ENCODE measurements at regions of chr11 and their contacts with region 1.

Region 1: DNA sequence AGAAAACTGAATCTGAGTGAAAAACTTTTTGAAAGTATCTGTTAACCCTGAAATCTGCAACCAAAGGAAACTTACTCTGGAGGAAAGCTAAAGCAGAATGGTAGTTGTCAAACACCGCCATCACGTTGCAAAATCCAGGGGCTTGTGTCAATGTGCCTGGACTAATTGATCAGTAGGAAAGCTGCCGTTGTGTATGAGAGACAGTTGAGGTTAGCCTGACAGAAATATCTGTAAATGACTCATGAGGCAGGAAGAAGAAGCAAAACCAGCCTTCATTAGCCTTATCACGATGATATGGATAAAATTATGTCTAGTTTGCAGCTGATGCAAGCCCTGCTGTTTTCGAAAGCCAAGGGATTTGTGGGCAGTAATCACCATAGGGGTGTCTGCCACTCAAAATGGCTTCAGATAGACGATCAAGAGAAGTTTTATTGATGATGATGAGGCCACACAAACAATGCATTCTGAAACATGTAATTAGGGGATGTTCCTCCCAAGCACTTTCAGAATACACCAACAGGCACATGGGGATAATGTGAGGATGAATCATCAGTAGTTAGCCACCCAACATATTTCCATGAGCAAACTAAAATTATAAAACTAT is 8.9 kb downstream of the SCGB1A1 start:
- DNase-seq: no peak
- H3K4me3 ChIP-seq: no peak overlapping the region
- H3K27ac ChIP-seq: no peak overlapping the region
- H3K4me1 ChIP-seq: 0 out of 7 replicates have a peak, but pooled peaks cover 0 to 2% (median 0%) of the 10 kb centered on the region in 4 experiments
- H3K27me3 ChIP-seq: peaks cover 0 to 15% (median 10%) of the 10 kb centered on the region in 4 experiments; a peak in 6 of 7 replicates
- CTCF ChIP-seq: no peak
- EP300 ChIP-seq: no peak
- POLR2A ChIP-seq: no peak
- RAD21 ChIP-seq: no peak

Region 2: GRCh38 chr11:62143727-62144126 is 284.0 kb before region 1 on chr11:
- CTCF ChIA-PET with region 1: no interaction called
- POLR2A ChIA-PET with region 1: no interaction called
- DNase-seq: no peak
- H3K4me3 ChIP-seq: no peak overlapping the region
- H3K27ac ChIP-seq: no peak overlapping the region
- H3K4me1 ChIP-seq: no peaks in the 10 kb centered on the region
- H3K27me3 ChIP-seq: no peaks in the 10 kb centered on the region
- CTCF ChIP-seq: peak in 1 of 3 experiments; percentile 20; a peak in 1 of 4 replicates
- EP300 ChIP-seq: no peak
- POLR2A ChIP-seq: no peak
- RAD21 ChIP-seq: no peak

Region 3: DNA sequence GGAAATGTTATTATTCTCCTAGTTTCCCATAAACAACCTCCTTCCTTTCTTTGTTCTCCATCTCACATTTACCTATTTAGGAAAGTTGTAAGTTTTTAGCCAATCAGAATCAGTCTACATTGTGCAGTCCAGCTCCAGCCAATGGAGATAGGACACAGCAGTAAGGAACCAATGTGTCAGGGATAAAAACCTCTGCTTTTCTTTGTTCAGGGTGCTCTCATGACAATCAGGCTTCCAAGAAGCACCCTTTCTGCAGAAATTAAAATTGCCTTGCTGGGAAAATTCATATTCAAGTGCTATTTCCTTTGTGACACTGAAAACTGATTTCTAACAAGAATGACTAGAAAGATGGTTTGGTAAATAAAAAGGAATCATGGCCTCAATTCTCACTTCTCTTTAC is 204.6 kb before region 1 on chr11:
- CTCF ChIA-PET with region 1: no interaction called
- POLR2A ChIA-PET with region 1: no interaction called
- DNase-seq: no peak
- H3K4me3 ChIP-seq: no peak overlapping the region
- H3K27ac ChIP-seq: no peak overlapping the region
- H3K4me1 ChIP-seq: peaks cover 0 to 3% (median 0%) of the 10 kb centered on the region in 4 experiments; a peak in 1 of 7 replicates
- H3K27me3 ChIP-seq: no peaks in the 10 kb centered on the region
- CTCF ChIP-seq: no peak
- EP300 ChIP-seq: no peak
- POLR2A ChIP-seq: no peak
- RAD21 ChIP-seq: no peak

Region 4: GRCh38 chr11:62444236-62444833 is 16.6 kb after region 1 on chr11:
- CTCF ChIA-PET with region 1: interaction called, 14 read pairs
- POLR2A ChIA-PET with region 1: no interaction called
- DNase-seq: no peak
- H3K4me3 ChIP-seq: no peak overlapping the region; a peak in 1 of 8 replicates
- H3K27ac ChIP-seq: no peak overlapping the region
- H3K4me1 ChIP-seq: peaks cover 0 to 6% (median 0%) of the 10 kb centered on the region in 4 experiments; a peak in 2 of 7 replicates
- H3K27me3 ChIP-seq: no peaks in the 10 kb centered on the region
- CTCF ChIP-seq: no peak
- EP300 ChIP-seq: no peak
- POLR2A ChIP-seq: no peak
- RAD21 ChIP-seq: no peak

Region 5: DNA sequence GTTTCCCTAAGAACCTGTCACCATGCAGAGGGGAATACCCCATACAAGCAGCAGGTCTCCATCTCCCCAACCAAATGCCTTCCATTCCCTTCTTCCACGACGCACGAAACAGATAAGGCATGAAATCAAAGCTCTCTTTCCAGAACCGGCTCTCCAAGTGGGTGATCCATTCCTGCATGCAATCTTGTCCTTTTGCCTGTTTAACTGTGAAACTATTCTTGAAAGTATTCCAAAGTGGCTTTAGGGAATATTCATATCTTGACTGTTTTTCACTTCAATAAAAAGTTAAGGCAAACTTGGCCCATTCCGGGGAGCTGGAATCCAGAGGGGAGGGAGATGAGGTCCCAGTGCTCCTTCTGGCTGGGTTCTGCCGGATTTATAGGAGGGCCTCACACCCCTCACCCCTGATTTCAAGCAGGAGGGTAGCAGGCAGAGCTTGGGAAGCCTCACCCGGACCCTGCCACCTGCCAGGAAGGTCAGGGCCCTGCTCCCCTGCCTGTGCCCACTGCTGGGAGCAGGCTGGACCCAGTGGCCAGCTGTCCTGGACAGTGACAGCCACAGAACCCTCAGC is 52.0 kb after region 1 on chr11:
- CTCF ChIA-PET with region 1: interaction called, 21 read pairs
- POLR2A ChIA-PET with region 1: no interaction called
- DNase-seq: no peak
- H3K4me3 ChIP-seq: no peak overlapping the region
- H3K27ac ChIP-seq: no peak overlapping the region
- H3K4me1 ChIP-seq: peaks cover 0 to 5% (median 0%) of the 10 kb centered on the region in 4 experiments; a peak in 2 of 7 replicates
- H3K27me3 ChIP-seq: no peaks in the 10 kb centered on the region
- CTCF ChIP-seq: no peak
- EP300 ChIP-seq: no peak
- POLR2A ChIP-seq: no peak
- RAD21 ChIP-seq: no peak

Region 6: DNA sequence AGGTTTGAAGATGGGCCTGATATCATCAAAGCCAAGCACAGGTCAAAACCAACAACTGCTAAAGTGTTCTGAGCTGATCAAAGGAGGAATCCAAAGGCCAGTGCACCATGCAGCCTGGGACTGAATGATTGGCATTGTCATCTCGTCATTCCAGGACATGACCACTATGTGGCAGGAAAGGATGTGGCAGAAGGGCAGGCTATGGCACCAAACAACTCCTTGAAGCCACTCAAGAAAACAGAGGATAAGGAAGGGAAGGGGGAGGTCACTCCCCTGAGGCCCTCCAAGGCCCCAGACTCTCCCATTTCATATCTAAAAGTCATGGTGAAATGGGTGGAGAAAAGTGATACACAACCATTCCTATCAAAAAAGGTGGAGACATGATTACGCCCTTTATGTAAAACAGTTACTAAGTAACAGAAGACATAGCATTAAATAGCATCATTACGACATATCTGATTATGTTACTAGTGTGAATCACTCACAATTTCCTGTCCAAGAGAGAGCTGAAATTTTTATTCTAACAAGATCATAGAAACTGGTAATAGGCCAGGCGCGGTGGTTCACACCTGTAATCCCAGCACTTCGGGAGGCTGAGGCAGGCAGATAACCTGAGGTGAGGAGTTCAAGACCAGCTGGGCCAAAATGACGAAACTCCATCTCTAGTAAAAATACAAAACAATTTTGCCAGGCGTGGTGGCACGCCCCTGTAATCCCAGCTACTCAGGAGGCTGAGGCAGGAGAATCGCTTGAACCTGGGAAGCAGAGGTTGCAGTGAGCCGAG is 69.6 kb after region 1 on chr11:
- CTCF ChIA-PET with region 1: interaction called, 14 read pairs
- POLR2A ChIA-PET with region 1: no interaction called
- DNase-seq: no peak
- H3K4me3 ChIP-seq: no peak overlapping the region
- H3K27ac ChIP-seq: no peak overlapping the region
- H3K4me1 ChIP-seq: peaks cover 2 to 11% (median 7%) of the 10 kb centered on the region in 4 experiments; a peak in 6 of 7 replicates
- H3K27me3 ChIP-seq: peaks cover 0 to 4% (median 0%) of the 10 kb centered on the region in 4 experiments; a peak in 3 of 7 replicates
- CTCF ChIP-seq: peak; percentile 67 to 82 (median 70)
- EP300 ChIP-seq: no peak
- POLR2A ChIP-seq: no peak
- RAD21 ChIP-seq: peak; percentile 85 to 88

Region 7: GRCh38 chr11:62508268-62509058 is 80.7 kb after region 1 on chr11:
- CTCF ChIA-PET with region 1: interaction called, 17 read pairs
- POLR2A ChIA-PET with region 1: no interaction called
- DNase-seq: peak; percentile 43 to 77
- H3K4me3 ChIP-seq: peak overlapping the region in 3 of 4 experiments; percentile 6 to 26 (median 7); a peak in 4 of 8 replicates
- H3K27ac ChIP-seq: peak overlapping the region; percentile 48
- H3K4me1 ChIP-seq: peaks cover 8 to 21% (median 15%) of the 10 kb centered on the region in 4 experiments
- H3K27me3 ChIP-seq: peaks cover 0 to 11% (median 4%) of the 10 kb centered on the region in 4 experiments; a peak in 4 of 7 replicates
- CTCF ChIP-seq: peak; percentile 24 to 68 (median 64); a peak in 3 of 4 replicates
- EP300 ChIP-seq: no peak; a peak in 1 of 3 replicates
- POLR2A ChIP-seq: no peak
- RAD21 ChIP-seq: peak; percentile 29 to 33; a peak in 2 of 4 replicates

Region 8: DNA sequence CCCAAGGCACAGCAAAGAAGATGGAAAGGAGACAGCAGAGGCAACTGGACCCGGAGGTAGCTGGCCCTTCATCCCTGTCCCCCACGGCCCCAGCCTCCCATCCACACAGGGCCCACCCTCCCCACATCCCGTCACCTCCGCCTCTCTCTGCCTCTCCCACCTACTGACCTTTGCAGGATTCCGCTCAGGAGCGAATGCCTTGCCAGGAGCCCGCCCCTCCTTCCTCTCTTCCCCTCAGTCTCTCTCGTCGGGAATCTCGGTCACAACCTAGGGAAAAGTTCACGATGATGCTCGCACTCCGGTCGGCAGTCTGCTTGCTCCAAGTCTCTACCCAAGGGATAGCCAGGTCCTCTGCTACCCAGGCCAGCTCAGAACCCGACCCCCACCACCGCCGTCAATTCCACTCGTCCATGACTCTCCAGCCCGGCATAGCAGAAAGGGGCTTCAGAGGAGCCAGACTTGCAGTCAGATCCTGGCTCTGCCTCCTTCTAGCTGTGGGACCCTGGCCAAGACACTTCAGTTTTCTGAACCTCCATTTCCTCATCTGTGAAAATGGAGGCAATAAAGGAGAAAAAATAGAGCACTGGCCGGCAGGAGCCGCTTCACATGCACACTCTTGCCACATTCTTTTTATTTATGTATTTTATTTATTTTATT is 108.7 kb after region 1 on chr11:
- CTCF ChIA-PET with region 1: interaction called, 165 read pairs
- POLR2A ChIA-PET with region 1: no interaction called
- DNase-seq: no peak
- H3K4me3 ChIP-seq: no peak overlapping the region
- H3K27ac ChIP-seq: no peak overlapping the region
- H3K4me1 ChIP-seq: peaks cover 0 to 9% (median 4%) of the 10 kb centered on the region in 4 experiments; a peak in 5 of 7 replicates
- H3K27me3 ChIP-seq: no peaks in the 10 kb centered on the region; a peak in 2 of 7 replicates
- CTCF ChIP-seq: no peak
- EP300 ChIP-seq: no peak
- POLR2A ChIP-seq: no peak
- RAD21 ChIP-seq: no peak